RWPE1 (cell line): ENCODE measurements at regions of chr16 and their contacts with region 1.

Region 1: GRCh38 chr16:30650369-30651123 is at the start of gene PRR14:
- DNase-seq: peak; percentile 96
- H3K27ac ChIP-seq: peak within 1 kb of the TSS; percentile 98
- CTCF ChIP-seq: no peak

Region 2: DNA sequence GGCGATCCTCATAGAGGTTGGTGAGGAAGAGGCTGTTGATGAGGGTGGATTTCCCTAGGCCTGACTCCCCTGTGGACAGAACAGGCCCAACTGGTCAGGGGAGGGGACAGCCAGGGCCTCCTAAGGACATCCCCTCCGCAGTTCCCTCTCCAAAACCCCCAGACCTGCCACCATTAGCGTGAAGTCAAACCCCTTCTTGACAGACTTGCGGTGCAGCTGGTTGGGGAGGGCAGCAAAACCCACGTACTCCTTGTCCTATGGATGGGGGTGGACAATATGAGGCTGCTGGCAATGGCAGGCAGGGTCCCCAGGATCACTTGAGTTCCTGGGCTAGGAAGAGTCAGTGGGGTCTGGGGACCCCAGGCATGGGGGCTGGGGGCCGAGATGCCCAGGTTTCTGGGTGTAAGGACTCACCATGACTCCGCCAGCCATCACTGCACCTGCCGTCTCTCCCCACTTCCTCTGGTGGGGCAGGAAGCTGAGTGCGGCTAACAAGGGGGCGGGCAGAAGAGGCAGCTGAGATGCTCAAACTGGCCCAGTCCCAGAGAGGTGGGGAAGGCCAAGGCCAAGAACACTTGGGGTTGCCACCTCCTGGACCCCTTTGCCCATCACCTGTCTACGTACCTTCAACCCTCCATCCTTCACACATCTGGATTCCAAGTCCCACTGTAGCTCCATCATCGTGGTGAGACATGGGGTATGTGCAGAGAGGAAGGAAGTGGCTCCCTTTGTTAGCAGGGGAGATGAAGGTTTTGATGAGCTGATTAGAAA is 268.2 kb before region 1 on chr16 and contains the start of gene SEPTIN1:
- CTCF ChIA-PET with region 1: no interaction called
- POLR2A ChIA-PET with region 1: interaction called, 11 read pairs
- DNase-seq: no peak
- H3K27ac ChIP-seq: peak within 1 kb of the TSS; percentile 42
- CTCF ChIP-seq: no peak

Region 3: GRCh38 chr16:30637942-30638341 is 12.6 kb before region 1 on chr16:
- CTCF ChIA-PET with region 1: interaction called, 4 read pairs
- POLR2A ChIA-PET with region 1: interaction called, 10 read pairs
- DNase-seq: peak; percentile 28
- H3K27ac ChIP-seq: 0 out of 2 replicates have a peak overlapping the region, but pooled peaks have one; percentile 21
- CTCF ChIP-seq: peak; percentile 68

Region 4: DNA sequence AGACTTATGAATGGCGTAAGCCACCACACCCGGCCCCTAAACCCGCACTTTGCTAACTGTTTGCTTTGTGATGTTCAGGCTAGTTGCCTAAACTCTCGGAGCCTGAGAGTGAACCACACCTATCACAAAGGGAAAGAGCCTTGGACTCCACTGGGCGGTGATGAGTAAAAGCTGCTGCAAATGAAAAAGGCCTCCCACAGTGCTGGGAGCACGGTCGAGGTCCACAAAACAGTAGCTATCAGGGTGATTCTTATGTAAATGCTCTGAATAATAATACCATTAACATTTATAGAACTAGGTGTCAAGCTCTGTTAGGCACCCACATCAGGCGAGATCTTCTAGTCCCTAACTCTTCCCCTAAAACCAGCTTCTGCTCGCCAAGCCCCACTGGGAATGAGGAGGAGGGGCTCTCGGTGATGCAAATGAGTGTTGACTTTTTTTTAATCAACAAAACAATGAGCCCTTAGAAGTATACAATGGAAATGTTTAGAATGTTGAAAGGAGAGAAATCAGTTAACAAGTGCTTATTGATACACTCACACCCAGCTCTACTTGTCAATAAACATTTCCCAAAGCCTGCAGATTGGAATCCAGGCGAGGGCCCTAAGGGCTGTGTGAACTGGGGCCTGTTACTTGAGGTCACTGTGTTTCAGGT is 27.5 kb after region 1 on chr16:
- CTCF ChIA-PET with region 1: no interaction called
- POLR2A ChIA-PET with region 1: no interaction called
- DNase-seq: no peak
- H3K27ac ChIP-seq: no peak overlapping the region
- CTCF ChIP-seq: no peak

Region 5: DNA sequence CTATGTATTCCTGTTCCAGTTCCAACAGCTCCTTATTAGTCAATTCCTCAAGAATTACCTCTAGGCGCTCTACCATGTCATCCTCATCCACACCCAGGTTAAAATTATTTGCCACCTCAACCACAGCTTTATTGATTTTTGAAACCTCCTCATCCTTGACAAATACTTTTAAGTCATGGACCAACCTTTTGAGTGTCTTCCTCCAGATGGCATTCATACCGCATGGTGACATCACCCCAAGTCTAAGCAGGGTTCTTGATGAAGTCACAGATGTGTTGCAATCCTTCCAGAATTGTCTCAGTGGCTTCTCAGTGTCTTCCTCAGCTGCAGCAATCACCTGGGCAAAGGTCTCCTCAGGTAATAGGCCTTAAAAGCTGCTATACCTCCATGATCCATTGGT is 203.2 kb after region 1 on chr16:
- CTCF ChIA-PET with region 1: no interaction called
- POLR2A ChIA-PET with region 1: no interaction called
- DNase-seq: peak; percentile 46
- H3K27ac ChIP-seq: no peak overlapping the region
- CTCF ChIP-seq: no peak